Right ventricle myocardium inferior (tissue), 1 donor: ENCODE measurements at regions of chr1 and their contacts with region 1.

Region 1: GRCh38 chr1:212621951-212622305 is 13.4 kb downstream of the ATF3 start:
- DNase-seq: no peak
- ATAC-seq: no peak

Region 2: GRCh38 chr1:212315907-212316306 is 306.0 kb before region 1 on chr1:
- intact Hi-C with region 1: no loop called
- DNase-seq: no peak
- ATAC-seq: peak; percentile 34

Region 3: DNA sequence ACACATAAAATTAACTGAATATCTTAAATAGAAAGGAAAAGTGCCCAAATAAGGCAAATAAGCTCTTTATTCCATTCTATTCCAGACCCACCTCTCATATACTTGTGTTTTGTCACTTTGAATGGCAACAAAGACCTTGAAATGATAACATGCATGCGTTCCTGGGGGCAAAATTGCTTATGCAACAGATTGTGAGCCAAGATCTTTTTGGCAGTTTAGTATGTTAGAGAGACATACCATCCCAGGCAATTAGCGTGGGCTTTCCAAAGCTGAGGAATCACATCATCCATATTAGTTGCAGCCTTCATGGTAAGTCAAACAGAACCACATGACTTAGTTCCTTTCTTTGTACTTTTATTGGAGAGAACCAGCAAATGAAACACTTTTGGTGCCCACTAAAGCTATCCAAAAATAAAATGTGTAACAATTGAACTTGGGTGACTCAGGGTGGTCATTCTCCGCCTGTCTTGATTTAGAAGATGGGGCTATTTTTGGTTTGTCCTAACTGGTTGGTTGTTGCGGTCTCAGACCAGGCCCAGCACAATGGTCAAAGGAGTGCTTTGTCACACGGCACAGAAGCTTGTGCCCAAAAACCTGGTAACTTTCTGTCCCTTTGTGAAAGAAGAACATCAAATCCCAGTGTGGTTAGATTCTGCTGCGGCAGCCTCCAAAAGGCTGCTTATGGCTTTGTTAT is 82.0 kb before region 1 on chr1:
- intact Hi-C with region 1: no loop called
- DNase-seq: no peak
- ATAC-seq: no peak

Region 4: GRCh38 chr1:212805767-212806166 is 183.8 kb after region 1 on chr1:
- intact Hi-C with region 1: no loop called
- DNase-seq: no peak
- ATAC-seq: no peak

Region 5: GRCh38 chr1:214566158-214567104 is 1944.5 kb after region 1 on chr1:
- intact Hi-C with region 1: loop called (anchors 10 kb)
- DNase-seq: no peak
- ATAC-seq: no peak